A549 (cell line): ENCODE measurements at regions of chr2 and their contacts with region 1.

Region 1: GRCh38 chr2:131673392-131674173 is 145.9 kb downstream of the CCDC74A start:
- DNase-seq: peak; percentile 59 to 78
- ATAC-seq: peak; percentile 95 to 98
- H3K4me3 ChIP-seq: peak overlapping the region; percentile 50
- H3K27ac ChIP-seq: peak overlapping the region in 1 of 2 experiments; percentile 29; a peak in 1 of 6 replicates
- H3K4me1 ChIP-seq: no peaks in the 10 kb centered on the region
- CTCF ChIP-seq: peak; percentile 79
- EP300 ChIP-seq: no peak
- POLR2A ChIP-seq: no peak
- RAD21 ChIP-seq: peak; percentile 74 to 79

Region 2: DNA sequence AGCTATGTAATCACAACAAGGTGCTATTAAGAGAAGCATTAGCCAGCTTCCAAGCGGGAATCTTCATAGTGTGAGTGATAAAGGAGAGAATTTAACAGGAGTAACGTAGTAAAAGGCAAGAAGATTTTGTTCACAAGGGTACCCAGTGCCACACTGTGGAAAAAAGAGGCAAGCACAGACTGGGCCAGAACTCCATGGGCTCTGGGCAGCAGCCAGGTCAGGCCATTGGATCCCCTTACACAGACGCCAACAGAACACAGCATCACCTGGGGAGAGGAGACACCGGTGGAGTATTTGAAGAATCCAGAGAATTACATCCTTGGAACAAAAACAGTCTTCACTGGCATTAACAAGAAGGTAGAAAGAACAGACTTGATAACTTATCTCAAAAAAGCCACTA is 897.0 kb before region 1 on chr2:
- CTCF ChIA-PET with region 1: no interaction called
- POLR2A ChIA-PET with region 1: no interaction called
- DNase-seq: no peak
- ATAC-seq: peak; percentile 69 to 71; a peak in 5 of 6 replicates
- H3K4me3 ChIP-seq: no peak overlapping the region
- H3K27ac ChIP-seq: no peak overlapping the region
- H3K4me1 ChIP-seq: no peaks in the 10 kb centered on the region
- CTCF ChIP-seq: no peak
- EP300 ChIP-seq: no peak
- POLR2A ChIP-seq: no peak
- RAD21 ChIP-seq: no peak; a peak in 1 of 5 replicates

Region 3: GRCh38 chr2:131413148-131413747 is 260.3 kb before region 1 on chr2:
- CTCF ChIA-PET with region 1: interaction called, 10 read pairs
- POLR2A ChIA-PET with region 1: no interaction called
- DNase-seq: peak; percentile 24 to 53
- ATAC-seq: peak; percentile 85 to 92
- H3K4me3 ChIP-seq: no peak overlapping the region
- H3K27ac ChIP-seq: no peak overlapping the region
- H3K4me1 ChIP-seq: no peaks in the 10 kb centered on the region
- CTCF ChIP-seq: peak; percentile 80
- EP300 ChIP-seq: no peak
- POLR2A ChIP-seq: no peak
- RAD21 ChIP-seq: peak; percentile 83 to 84

Region 4: DNA sequence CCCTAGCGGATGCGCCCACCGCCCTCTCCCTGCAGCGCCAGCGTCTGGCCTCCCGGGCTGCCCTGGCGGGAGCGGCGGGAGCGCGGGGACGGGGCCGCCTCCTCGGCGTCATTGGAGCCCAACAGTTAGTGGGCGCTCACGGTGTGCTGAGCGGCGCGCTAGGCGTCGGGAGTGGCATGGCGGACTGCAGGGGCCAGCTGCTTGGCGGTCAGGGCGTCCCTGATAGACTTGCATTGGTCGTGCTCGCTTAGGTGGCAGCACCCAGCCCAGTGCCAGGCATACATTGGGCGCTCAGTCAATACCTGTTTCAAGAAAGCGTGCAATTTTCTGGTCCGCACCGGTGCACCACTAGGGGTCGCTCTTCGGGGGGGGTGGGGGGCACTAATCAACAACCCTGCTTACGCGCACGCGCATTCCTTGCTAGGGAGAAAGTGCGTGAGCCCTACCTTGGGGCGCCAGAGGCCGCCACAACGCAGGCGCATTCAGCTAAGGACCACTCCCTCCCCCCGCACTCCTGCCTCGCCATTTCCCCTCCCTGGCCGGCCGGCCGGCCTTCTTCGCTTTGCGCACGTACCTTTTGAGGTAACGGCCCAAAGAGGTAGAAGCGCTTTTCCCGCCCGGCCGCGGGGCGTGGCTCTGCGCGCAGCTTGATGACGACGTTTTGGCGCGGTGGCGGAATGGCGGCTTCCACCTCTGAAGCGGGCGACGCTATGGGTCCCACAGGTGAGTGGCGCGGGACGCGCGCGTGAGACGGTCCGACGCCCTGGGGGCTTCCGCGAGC is 181.0 kb before region 1 on chr2:
- CTCF ChIA-PET with region 1: interaction called, 16 read pairs
- POLR2A ChIA-PET with region 1: interaction called, 5 read pairs
- DNase-seq: peak; percentile 93 to 98
- ATAC-seq: peak; percentile 83 to 89
- H3K4me3 ChIP-seq: peak overlapping the region; percentile 99
- H3K27ac ChIP-seq: peak overlapping the region; percentile 98 to 99
- H3K4me1 ChIP-seq: peaks cover 26% of the 10 kb centered on the region; the same call in 2 of the 3 replicates
- CTCF ChIP-seq: peak; percentile 85
- EP300 ChIP-seq: no peak
- POLR2A ChIP-seq: peak; percentile 55
- RAD21 ChIP-seq: peak; percentile 5 to 31; a peak in 2 of 5 replicates

Region 5: GRCh38 chr2:131801210-131801744 is 127.7 kb after region 1 on chr2:
- CTCF ChIA-PET with region 1: interaction called, 20 read pairs
- POLR2A ChIA-PET with region 1: no interaction called
- DNase-seq: no peak
- ATAC-seq: peak in 1 of 2 experiments; percentile 33; a peak in 1 of 6 replicates
- H3K4me3 ChIP-seq: no peak overlapping the region; the same call in 2 of the 3 replicates
- H3K27ac ChIP-seq: no peak overlapping the region
- H3K4me1 ChIP-seq: no peaks in the 10 kb centered on the region
- CTCF ChIP-seq: no peak
- EP300 ChIP-seq: no peak
- POLR2A ChIP-seq: no peak
- RAD21 ChIP-seq: no peak

Region 6: DNA sequence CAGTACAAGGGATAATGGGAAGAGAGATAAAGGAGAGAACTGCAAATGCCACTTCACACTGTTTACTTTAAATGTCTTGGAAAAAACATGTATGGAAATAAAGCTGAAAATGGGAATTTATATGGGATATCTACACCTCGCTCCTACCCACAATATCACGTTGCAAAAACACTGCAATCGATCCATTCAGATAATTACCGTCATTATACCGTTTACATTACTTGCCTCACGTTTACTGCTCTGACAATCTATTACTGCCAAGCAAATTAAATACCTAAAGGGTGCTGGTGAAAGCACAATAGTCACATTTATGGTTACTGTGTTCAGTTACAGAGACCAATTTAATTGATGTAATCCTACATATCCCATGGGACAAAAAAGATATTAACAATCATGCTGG is 1211.1 kb after region 1 on chr2:
- CTCF ChIA-PET with region 1: no interaction called
- POLR2A ChIA-PET with region 1: no interaction called
- DNase-seq: no peak
- ATAC-seq: no peak
- H3K4me3 ChIP-seq: no peak overlapping the region
- H3K27ac ChIP-seq: peak overlapping the region; percentile 23 to 61; a peak in 4 of 6 replicates
- H3K4me1 ChIP-seq: peaks cover 18% of the 10 kb centered on the region; the same call in 2 of the 3 replicates
- CTCF ChIP-seq: no peak
- EP300 ChIP-seq: no peak
- POLR2A ChIP-seq: no peak
- RAD21 ChIP-seq: no peak